ENCODE measurements at regions of chr4 and their contacts with region 1.

Region 1: GRCh38 chr4:6372649-6373525 is 99.5 kb downstream of the PPP2R2C start:
- DNase-seq: peak in 10 of 42 donors; percentile 17 to 68 (median 52)

Region 2: GRCh38 chr4:6546681-6547447 is 174.0 kb after region 1 on chr4:
- intact Hi-C with region 1: loop called (anchors 10 kb)
- DNase-seq: peak in 41 of 42 donors; percentile 32 to 88 (median 69)